ENCODE measurements at regions of chr2 and their contacts with region 1.

Region 1: DNA sequence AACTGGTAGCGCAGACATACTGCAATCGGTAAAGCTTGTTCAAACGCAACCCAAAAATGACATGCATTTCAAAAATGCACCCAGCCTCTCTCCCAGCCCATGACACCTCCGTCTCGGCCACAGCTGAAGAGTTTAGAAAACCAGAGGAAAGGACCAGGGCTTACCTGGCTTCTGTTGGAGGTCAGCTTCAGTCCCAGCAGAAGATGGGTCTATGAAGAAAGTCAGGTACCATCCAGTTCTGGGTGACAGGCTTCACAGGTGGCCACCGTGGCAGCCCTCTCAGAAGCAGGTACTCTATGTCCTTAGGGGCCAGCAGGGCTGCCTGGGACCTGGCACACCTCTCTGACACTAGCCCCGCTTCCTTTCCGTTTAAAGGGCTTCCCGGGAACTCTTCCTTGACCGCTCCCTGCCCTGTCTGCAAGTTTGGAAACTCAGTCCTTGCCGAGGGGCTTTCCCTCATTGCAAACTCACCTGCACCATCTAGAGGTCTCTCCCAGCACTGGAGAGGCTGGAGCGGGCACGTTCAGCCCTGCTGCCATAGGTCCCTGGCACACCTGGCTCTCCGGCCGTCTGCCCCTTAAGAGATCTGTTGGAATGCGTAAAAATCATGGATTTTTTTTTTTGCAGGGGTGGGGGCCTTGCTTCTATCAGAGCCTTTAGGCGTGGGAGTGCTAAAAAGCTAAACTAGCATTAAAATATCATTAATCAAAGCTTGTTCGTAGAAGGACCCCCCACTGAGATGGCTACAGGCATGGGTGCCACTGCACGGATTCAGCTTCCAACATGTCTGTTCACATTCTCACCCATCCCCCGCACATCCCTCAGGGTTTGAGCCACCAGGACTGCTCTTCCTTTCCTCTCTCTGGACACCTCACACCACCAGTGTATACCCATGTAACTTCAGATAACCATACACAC is at the start of gene EDAR:
- DNase-seq: peak; percentile 42
- ATAC-seq: peak; percentile 79
- H3K4me3 Mint-ChIP-seq: no peak within 1 kb of the TSS
- H3K27ac Mint-ChIP-seq: no peak within 1 kb of the TSS
- H3K4me1 Mint-ChIP-seq: peaks cover 18% of the 10 kb centered on the region
- H3K27me3 Mint-ChIP-seq: peaks cover 2% of the 10 kb centered on the region
- total RNA-seq, gene EDAR: not detected

Region 2: GRCh38 chr2:108927936-108928659 is 61.0 kb before region 1 on chr2:
- CTCF ChIA-PET with region 1: interaction called, 42 read pairs
- POLR2A ChIA-PET with region 1: no interaction called
- DNase-seq: peak; percentile 49
- ATAC-seq: peak; percentile 58
- H3K4me3 Mint-ChIP-seq: no peak overlapping the region
- H3K27ac Mint-ChIP-seq: no peak overlapping the region
- H3K4me1 Mint-ChIP-seq: no peaks in the 10 kb centered on the region
- H3K27me3 Mint-ChIP-seq: no peaks in the 10 kb centered on the region

Region 3: GRCh38 chr2:109045505-109045904 is 56.5 kb after region 1 on chr2:
- CTCF ChIA-PET with region 1: no interaction called
- POLR2A ChIA-PET with region 1: no interaction called
- DNase-seq: no peak
- ATAC-seq: no peak
- H3K4me3 Mint-ChIP-seq: no peak overlapping the region
- H3K27ac Mint-ChIP-seq: no peak overlapping the region
- H3K4me1 Mint-ChIP-seq: peaks cover 10% of the 10 kb centered on the region
- H3K27me3 Mint-ChIP-seq: peaks cover 2% of the 10 kb centered on the region

Region 4: DNA sequence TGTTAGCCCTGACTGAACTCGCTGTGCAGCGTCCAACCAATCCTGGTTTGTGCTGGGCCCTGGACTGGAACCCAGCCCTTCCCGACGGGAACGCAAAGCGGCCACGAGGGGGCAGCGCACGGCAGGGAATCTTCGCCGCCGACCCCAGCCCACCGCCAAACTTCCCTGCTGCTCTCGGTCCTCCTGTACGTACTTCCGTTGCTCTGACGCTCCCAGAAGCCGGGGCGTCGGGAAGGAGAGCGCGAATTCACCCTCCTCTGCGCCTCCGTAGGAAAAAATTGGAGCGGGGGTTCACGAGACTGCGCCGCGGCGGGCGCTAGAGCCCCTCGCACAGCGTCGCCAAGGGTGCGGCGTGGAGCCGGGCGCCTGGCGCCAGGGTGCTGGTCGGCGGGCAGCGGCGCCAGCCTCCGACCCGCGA is 139.0 kb after region 1 on chr2:
- CTCF ChIA-PET with region 1: no interaction called
- POLR2A ChIA-PET with region 1: no interaction called
- DNase-seq: peak; percentile 64
- ATAC-seq: peak; percentile 59
- H3K4me3 Mint-ChIP-seq: peak overlapping the region; percentile 68
- H3K27ac Mint-ChIP-seq: no peak overlapping the region
- H3K4me1 Mint-ChIP-seq: peaks cover 15% of the 10 kb centered on the region
- H3K27me3 Mint-ChIP-seq: peaks cover 32% of the 10 kb centered on the region

Measured in activated CD8-positive, alpha-beta T cell treated with anti-CD3 and anti-CD28 coated beads, Interleukin-2, amount 10 ng/mL, durations not matched to agents 7 days and 5 days (primary cell).